Naive thymus-derived CD4-positive, alpha-beta T cell (primary cell): ENCODE measurements at regions of chrX and their contacts with region 1.

Region 1: DNA sequence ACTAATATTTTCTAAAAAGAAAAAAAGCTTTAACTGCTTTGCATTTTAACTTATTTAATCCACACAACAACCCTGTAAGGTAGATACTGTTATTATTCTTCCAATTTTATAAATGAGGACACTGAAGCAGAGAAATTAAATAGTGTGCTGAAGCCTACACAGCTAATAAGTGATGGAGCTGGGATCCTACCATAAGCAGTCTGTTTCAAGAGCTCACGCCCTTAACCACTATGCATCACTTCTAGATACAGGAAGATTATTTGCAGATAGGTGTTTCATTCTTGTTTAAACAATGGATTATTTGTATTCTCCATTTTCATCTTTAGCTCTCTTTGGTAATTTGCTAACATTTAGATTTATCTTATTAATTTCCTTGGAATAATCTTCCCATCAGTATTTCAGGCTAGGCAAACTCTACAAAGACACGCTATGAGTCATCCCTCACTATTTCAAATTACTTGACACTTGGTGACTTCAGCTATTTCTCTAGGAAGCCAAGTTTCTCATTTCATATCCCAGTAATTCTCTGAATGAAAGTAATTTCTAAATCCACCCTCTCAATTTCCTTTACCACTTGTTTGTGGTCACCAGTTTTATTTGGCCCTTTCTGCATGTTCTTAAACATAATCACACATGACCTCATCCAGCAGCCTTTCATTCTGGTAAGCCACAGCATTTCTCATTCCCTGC is 67.3 kb downstream of the ASB9 start:
- DNase-seq: no peak
- ATAC-seq: no peak
- H3K4me3 ChIP-seq: no peak overlapping the region
- H3K4me3 Mint-ChIP-seq: peak overlapping the region in 1 of 10 donors; percentile 38
- H3K27ac ChIP-seq: no peak overlapping the region
- H3K27ac Mint-ChIP-seq: peak overlapping the region in 2 of 9 donors; percentile 76 to 84
- H3K4me1 ChIP-seq: peaks cover 0 to 14% of the 10 kb centered on the region in 2 donors
- H3K4me1 Mint-ChIP-seq: peaks cover 9 to 47% (median 24%) of the 10 kb centered on the region in 7 donors
- H3K27me3 ChIP-seq: no peaks in the 10 kb centered on the region
- H3K27me3 Mint-ChIP-seq: peaks cover 0 to 7% (median 0%) of the 10 kb centered on the region in 5 donors

Region 2: DNA sequence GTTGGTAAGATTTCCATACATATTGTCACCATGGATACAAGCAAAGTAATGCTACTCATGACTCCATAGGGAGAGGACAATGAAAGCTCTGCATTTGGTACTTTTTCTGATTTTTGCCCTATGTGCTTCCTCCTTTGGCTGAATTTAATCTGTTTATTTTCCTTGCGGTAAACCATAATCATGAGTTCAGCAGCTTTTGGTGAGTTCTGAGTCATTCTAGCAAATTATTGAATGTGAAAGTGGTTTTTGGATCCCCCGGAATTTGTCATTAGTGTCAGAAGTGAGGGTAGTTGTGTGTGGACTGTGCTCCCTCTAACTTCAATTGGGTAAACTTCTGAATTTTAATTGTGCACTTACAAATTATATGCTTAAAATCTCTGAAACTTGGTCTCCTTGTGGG is 159.1 kb before region 1 on chrX:
- CTCF ChIA-PET with region 1: no interaction called
- POLR2A ChIA-PET with region 1: no interaction called
- intact Hi-C with region 1: no loop called
- DNase-seq: no peak
- ATAC-seq: no peak
- H3K4me3 ChIP-seq: no peak overlapping the region
- H3K4me3 Mint-ChIP-seq: no peak overlapping the region
- H3K27ac ChIP-seq: no peak overlapping the region
- H3K27ac Mint-ChIP-seq: no peak overlapping the region
- H3K4me1 ChIP-seq: no peaks in the 10 kb centered on the region
- H3K4me1 Mint-ChIP-seq: no peaks in the 10 kb centered on the region
- H3K27me3 ChIP-seq: no peaks in the 10 kb centered on the region
- H3K27me3 Mint-ChIP-seq: no peaks in the 10 kb centered on the region

Region 3: GRCh38 chrX:15151267-15152186 is 51.1 kb before region 1 on chrX:
- CTCF ChIA-PET with region 1: no interaction called
- POLR2A ChIA-PET with region 1: no interaction called
- intact Hi-C with region 1: loop called (anchors 2 to 5 kb)
- DNase-seq: peak in 4 of 9 donors; percentile 14 to 22 (median 15)
- ATAC-seq: peak; percentile 45
- H3K4me3 ChIP-seq: no peak overlapping the region
- H3K4me3 Mint-ChIP-seq: peak overlapping the region in 9 of 10 donors; percentile 11 to 66 (median 49)
- H3K27ac ChIP-seq: no peak overlapping the region
- H3K27ac Mint-ChIP-seq: peak overlapping the region in 7 of 9 donors; percentile 9 to 93 (median 62)
- H3K4me1 ChIP-seq: peaks cover 5 to 11% of the 10 kb centered on the region in 2 donors
- H3K4me1 Mint-ChIP-seq: peaks cover 7 to 52% (median 25%) of the 10 kb centered on the region in 7 donors
- H3K27me3 ChIP-seq: no peaks in the 10 kb centered on the region
- H3K27me3 Mint-ChIP-seq: peaks cover 0 to 3% (median 0%) of the 10 kb centered on the region in 5 donors

Region 4: GRCh38 chrX:15158736-15159406 is 43.7 kb before region 1 on chrX:
- CTCF ChIA-PET with region 1: no interaction called
- POLR2A ChIA-PET with region 1: no interaction called
- intact Hi-C with region 1: loop called (anchors 1 to 5 kb)
- DNase-seq: peak in 5 of 9 donors; percentile 16 to 36 (median 21)
- ATAC-seq: peak; percentile 57
- H3K4me3 ChIP-seq: peak overlapping the region; percentile 36
- H3K4me3 Mint-ChIP-seq: peak overlapping the region; percentile 52 to 91 (median 82)
- H3K27ac ChIP-seq: no peak overlapping the region
- H3K27ac Mint-ChIP-seq: peak overlapping the region; percentile 72 to 98 (median 92)
- H3K4me1 ChIP-seq: peaks cover 7 to 17% of the 10 kb centered on the region in 2 donors
- H3K4me1 Mint-ChIP-seq: peaks cover 3 to 52% (median 39%) of the 10 kb centered on the region in 7 donors
- H3K27me3 ChIP-seq: no peaks in the 10 kb centered on the region
- H3K27me3 Mint-ChIP-seq: no peaks in the 10 kb centered on the region